Dorsolateral prefrontal cortex (tissue), 120 donors: ENCODE measurements at regions of chr17 and their contacts with region 1.

Region 1: DNA sequence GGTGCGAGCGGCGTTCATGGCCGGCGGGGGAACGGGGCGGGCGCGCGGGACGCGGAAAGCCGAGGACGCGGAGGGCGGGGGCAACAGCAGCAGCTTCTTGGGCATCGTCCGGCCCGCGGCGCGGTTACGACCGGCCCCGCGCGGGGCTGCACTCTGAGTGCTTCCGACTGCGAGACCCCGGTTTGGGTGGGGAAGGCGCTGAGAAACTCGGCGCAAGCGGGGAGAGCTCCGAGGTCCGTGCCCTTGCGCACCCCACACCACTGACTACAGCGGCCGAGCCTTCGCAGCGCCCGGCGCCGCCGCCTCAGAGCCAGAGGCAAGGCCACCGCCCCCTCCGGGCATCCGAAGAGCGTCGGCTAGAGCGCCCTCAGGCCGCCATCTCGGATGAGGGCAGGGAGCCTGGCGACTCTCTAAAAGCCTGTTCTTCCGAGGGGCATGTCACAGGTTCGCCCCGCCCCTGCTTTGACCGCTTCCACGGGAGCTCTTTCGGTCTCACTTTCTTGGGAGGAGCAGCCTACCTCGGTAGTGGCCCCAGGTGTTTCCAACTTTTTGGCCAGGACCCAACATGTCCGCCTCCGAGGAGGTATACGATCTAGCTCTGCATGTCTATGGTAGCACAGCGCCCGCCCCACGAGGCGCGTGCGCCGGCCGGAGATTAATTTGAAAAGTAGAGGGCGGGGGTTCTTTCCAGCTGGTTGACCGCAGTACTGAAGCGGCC is at the start of gene PRPSAP1:
- DNase-seq: peak; percentile 80 to 92 (median 88)
- H3K4me3 ChIP-seq: peak within 1 kb of the TSS; percentile 65 to 99 (median 93)
- H3K27ac ChIP-seq: peak within 1 kb of the TSS; percentile 59 to 97 (median 91)
- H3K27me3 ChIP-seq: no peaks in the 10 kb centered on the region
- CTCF ChIP-seq: peak in 55 of 56 donors; percentile 28 to 81 (median 60)
- total RNA-seq, gene PRPSAP1: 61.6 to 131 (median 85.2) TPM

Region 2: DNA sequence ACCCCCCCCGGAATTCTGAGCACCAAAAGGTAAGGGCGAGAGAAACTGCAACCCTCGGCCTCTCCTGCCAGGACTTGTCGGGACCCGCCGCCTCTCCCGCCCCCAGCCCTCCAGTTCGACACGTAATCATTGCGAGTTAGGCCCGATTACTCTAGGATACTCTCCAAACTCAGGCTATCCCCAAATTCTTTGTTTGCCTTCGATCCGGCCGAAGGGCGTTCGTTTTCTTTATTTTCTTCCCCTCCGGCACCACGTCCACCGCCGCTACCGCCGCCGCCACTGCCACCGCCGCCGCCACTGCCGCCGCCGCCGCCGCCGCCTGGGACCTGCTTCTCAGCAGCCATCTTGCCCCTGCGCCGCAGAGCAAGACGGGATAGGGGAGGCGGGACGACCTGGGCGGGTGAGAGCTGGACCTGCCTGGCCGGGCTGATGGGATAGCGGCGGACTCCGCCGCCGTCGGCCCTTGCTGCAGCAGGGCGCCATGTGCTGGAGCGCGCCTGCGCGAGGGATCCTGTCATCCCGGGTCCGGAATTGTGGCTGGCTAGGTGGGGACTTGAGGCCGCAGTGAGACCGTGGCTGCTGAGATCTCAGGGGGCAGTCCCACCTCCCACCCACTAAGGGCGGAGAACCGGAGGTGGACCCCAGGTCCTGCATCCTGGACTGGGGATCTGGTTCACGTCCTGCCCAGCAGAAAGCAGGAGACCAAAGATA is 281.5 kb before region 1 on chr17 and contains the start of gene SRP68:
- intact Hi-C with region 1: loop called in 1 of 2 experiments (anchors 1 kb)
- DNase-seq: peak; percentile 94 to 98 (median 96)
- H3K4me3 ChIP-seq: peak within 1 kb of the TSS; percentile 56 to 100 (median 84)
- H3K27ac ChIP-seq: peak within 1 kb of the TSS in 56 of 59 donors; percentile 30 to 92 (median 81)
- H3K27me3 ChIP-seq: peaks cover 12 to 41% (median 40%) of the 10 kb centered on the region in 45 donors
- CTCF ChIP-seq: peak in 40 of 56 donors; percentile 9 to 62 (median 38)
- total RNA-seq, gene SRP68: 59.1 to 102 (median 84.3) TPM

Region 3: GRCh38 chr17:76385892-76386721 is 32.3 kb after region 1 on chr17:
- intact Hi-C with region 1: loop called (anchors 5 kb)
- DNase-seq: peak in 4 of 10 donors; percentile 49 to 67 (median 52)
- H3K4me3 ChIP-seq: peak overlapping the region; percentile 8 to 74 (median 60)
- H3K27ac ChIP-seq: peak overlapping the region in 11 of 59 donors; percentile 4 to 84 (median 40)
- H3K27me3 ChIP-seq: peaks cover 0 to 15% (median 0%) of the 10 kb centered on the region in 45 donors
- CTCF ChIP-seq: peak; percentile 51 to 87 (median 71)